Heart right ventricle (tissue), 16 donors: ENCODE measurements at regions of chrX and their contacts with region 1.

Region 1: GRCh38 chrX:57821703-57822375 is 88.4 kb downstream of the ZXDA start:
- DNase-seq: peak in 1 of 2 donors; percentile 46
- ATAC-seq: peak; percentile 62 to 87 (median 82)
- H3K4me3 ChIP-seq: peak overlapping the region in 6 of 10 donors; percentile 11 to 37 (median 33)
- H3K27ac ChIP-seq: no peak overlapping the region
- H3K4me1 ChIP-seq: no peaks in the 10 kb centered on the region
- H3K27me3 ChIP-seq: peaks cover 0 to 12% (median 0%) of the 10 kb centered on the region in 7 donors
- CTCF ChIP-seq: peak; percentile 44 to 73 (median 65)

Region 2: DNA sequence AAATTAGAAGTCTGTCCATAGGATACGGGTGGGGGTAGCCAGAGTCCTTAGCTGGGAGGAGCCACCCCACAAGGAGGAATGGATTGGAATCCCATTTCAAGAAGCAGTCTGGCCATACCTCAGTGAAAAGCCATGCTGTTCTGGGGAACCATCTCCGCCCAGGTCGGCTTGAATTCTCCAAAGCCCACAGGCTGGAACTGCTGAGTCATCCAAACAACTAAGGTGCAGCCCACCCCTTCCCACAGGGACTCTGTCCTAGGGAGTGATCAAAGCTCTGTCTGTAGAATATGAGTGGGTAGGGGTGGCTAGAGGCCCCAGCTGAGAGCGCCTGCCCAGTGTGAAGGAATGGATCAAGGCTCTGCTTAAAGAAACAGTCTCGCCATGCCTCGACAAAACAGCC is 49.6 kb after region 1 on chrX:
- intact Hi-C with region 1: loop called in 1 of 10 experiments (anchors 10 kb)
- DNase-seq: no peak
- ATAC-seq: no peak
- H3K4me3 ChIP-seq: no peak overlapping the region
- H3K27ac ChIP-seq: no peak overlapping the region
- H3K4me1 ChIP-seq: no peaks in the 10 kb centered on the region
- H3K27me3 ChIP-seq: no peaks in the 10 kb centered on the region
- CTCF ChIP-seq: no peak

Region 3: DNA sequence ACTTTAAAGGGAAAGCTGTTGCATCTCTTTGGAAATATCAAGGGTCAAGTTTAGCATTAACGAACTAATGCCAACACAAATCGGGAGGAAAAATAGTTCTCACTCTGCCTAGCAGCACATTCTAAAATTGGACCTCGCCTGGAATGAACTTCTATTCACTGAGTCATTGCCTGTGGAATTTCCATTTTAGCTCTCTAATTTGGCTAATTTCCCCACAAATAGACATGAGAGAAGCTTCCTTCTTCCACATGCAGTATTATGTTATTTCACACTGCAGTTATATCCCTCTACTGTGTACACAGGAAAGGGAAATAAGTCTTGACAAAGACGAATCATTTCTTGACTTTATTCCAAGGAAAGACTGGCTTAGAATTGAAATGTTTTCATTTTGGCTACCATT is 79.1 kb after region 1 on chrX:
- intact Hi-C with region 1: no loop called
- DNase-seq: peak in 1 of 2 donors; percentile 18
- ATAC-seq: peak in 7 of 8 donors; percentile 71 to 93 (median 87)
- H3K4me3 ChIP-seq: peak overlapping the region in 5 of 10 donors; percentile 10 to 34 (median 27)
- H3K27ac ChIP-seq: peak overlapping the region; percentile 27 to 88 (median 53)
- H3K4me1 ChIP-seq: peaks cover 0 to 65% (median 15%) of the 10 kb centered on the region in 9 donors
- H3K27me3 ChIP-seq: peaks cover 0 to 10% (median 0%) of the 10 kb centered on the region in 7 donors
- CTCF ChIP-seq: no peak

Region 4: GRCh38 chrX:57918750-57919436 is 97.1 kb after region 1 on chrX:
- intact Hi-C with region 1: loop called in 7 of 10 experiments (anchors 1 to 5 kb)
- DNase-seq: peak; percentile 8 to 23
- ATAC-seq: peak; percentile 38 to 66 (median 48)
- H3K4me3 ChIP-seq: peak overlapping the region in 4 of 10 donors; percentile 10 to 28 (median 27)
- H3K27ac ChIP-seq: no peak overlapping the region
- H3K4me1 ChIP-seq: no peaks in the 10 kb centered on the region
- H3K27me3 ChIP-seq: no peaks in the 10 kb centered on the region
- CTCF ChIP-seq: peak; percentile 19 to 67 (median 57)

Region 5: GRCh38 chrX:57929373-57929772 is 107.5 kb after region 1 on chrX:
- intact Hi-C with region 1: loop called in 6 of 10 experiments (anchors 2 to 5 kb)
- DNase-seq: no peak
- ATAC-seq: peak in 3 of 8 donors; percentile 42 to 61 (median 43)
- H3K4me3 ChIP-seq: no peak overlapping the region
- H3K27ac ChIP-seq: no peak overlapping the region
- H3K4me1 ChIP-seq: no peaks in the 10 kb centered on the region
- H3K27me3 ChIP-seq: peaks cover 0 to 6% (median 0%) of the 10 kb centered on the region in 7 donors
- CTCF ChIP-seq: peak; percentile 12 to 61 (median 48)

Region 6: DNA sequence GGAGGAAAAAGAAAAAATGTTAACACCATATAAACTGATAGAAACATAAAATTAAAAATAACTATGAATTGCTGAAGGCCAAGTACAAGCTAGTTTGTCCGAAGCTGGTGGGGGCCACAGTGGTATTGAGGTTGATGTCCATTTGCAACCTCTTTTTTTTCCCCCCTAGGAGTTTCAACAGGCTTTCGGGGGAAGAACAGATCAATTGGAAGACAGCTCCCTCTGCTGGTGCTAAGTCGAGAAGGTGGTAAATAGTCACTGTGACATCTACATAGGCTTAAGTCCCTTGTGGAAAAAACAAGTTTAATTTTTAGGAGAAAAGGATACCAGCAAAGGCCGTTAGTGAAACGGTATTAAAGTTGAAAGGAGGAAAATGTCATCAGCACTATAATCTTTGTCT is 204.1 kb after region 1 on chrX:
- intact Hi-C with region 1: loop called in 7 of 10 experiments (anchors 5 to 10 kb)
- DNase-seq: peak in 1 of 2 donors; percentile 8
- ATAC-seq: no peak
- H3K4me3 ChIP-seq: no peak overlapping the region
- H3K27ac ChIP-seq: no peak overlapping the region
- H3K4me1 ChIP-seq: no peaks in the 10 kb centered on the region
- H3K27me3 ChIP-seq: peaks cover 0 to 24% (median 0%) of the 10 kb centered on the region in 7 donors
- CTCF ChIP-seq: peak in 8 of 9 donors; percentile 21 to 66 (median 58)